ENCODE measurements at regions of chr13 and their contacts with region 1.

Region 1: GRCh38 chr13:111046590-111047141 is 68.4 kb upstream of the ARHGEF7 start:
- DNase-seq: no peak
- H3K4me3 ChIP-seq: no peak overlapping the region
- H3K27ac ChIP-seq: peak overlapping the region in 1 of 4 donors; percentile 28
- H3K4me1 ChIP-seq: peaks cover 0 to 3% (median 2%) of the 10 kb centered on the region in 4 donors
- H3K27me3 ChIP-seq: no peaks in the 10 kb centered on the region
- CTCF ChIP-seq: peak in 3 of 5 experiments; percentile 15 to 19 (median 17)
- EP300 ChIP-seq: no peak
- POLR2A ChIP-seq: no peak

Region 2: GRCh38 chr13:110680851-110681250 is 365.8 kb before region 1 on chr13:
- in situ Hi-C with region 1: no loop called
- intact Hi-C with region 1: no loop called
- DNase-seq: no peak
- H3K4me3 ChIP-seq: no peak overlapping the region
- H3K27ac ChIP-seq: no peak overlapping the region
- H3K4me1 ChIP-seq: peaks cover 0 to 13% (median 0%) of the 10 kb centered on the region in 4 donors
- H3K27me3 ChIP-seq: no peaks in the 10 kb centered on the region
- CTCF ChIP-seq: peak; percentile 23 to 30 (median 25)
- EP300 ChIP-seq: no peak
- POLR2A ChIP-seq: no peak

Region 3: GRCh38 chr13:110882972-110883371 is 163.7 kb before region 1 on chr13:
- in situ Hi-C with region 1: no loop called
- intact Hi-C with region 1: no loop called
- DNase-seq: no peak
- H3K4me3 ChIP-seq: no peak overlapping the region
- H3K27ac ChIP-seq: no peak overlapping the region
- H3K4me1 ChIP-seq: peaks cover 0 to 5% (median 0%) of the 10 kb centered on the region in 4 donors
- H3K27me3 ChIP-seq: no peaks in the 10 kb centered on the region
- CTCF ChIP-seq: no peak
- EP300 ChIP-seq: no peak
- POLR2A ChIP-seq: no peak

Region 4: GRCh38 chr13:110944121-110944967 is 102.3 kb before region 1 on chr13:
- in situ Hi-C with region 1: loop called in 1 of 4 experiments (anchors 10 kb)
- intact Hi-C with region 1: no loop called
- DNase-seq: peak; percentile 20
- H3K4me3 ChIP-seq: no peak overlapping the region
- H3K27ac ChIP-seq: no peak overlapping the region
- H3K4me1 ChIP-seq: no peaks in the 10 kb centered on the region
- H3K27me3 ChIP-seq: no peaks in the 10 kb centered on the region
- CTCF ChIP-seq: peak; percentile 34 to 59 (median 42)
- EP300 ChIP-seq: no peak
- POLR2A ChIP-seq: no peak

Region 5: GRCh38 chr13:111031531-111031961 is 15.1 kb before region 1 on chr13:
- in situ Hi-C with region 1: no loop called
- intact Hi-C with region 1: no loop called
- DNase-seq: peak; percentile 17
- H3K4me3 ChIP-seq: no peak overlapping the region
- H3K27ac ChIP-seq: no peak overlapping the region
- H3K4me1 ChIP-seq: no peaks in the 10 kb centered on the region
- H3K27me3 ChIP-seq: no peaks in the 10 kb centered on the region
- CTCF ChIP-seq: no peak
- EP300 ChIP-seq: no peak
- POLR2A ChIP-seq: no peak

Measured in transverse colon (tissue), 4 donors.